Psoas muscle (tissue), 8 donors: ENCODE measurements at regions of chr10 and their contacts with region 1.

Region 1: DNA sequence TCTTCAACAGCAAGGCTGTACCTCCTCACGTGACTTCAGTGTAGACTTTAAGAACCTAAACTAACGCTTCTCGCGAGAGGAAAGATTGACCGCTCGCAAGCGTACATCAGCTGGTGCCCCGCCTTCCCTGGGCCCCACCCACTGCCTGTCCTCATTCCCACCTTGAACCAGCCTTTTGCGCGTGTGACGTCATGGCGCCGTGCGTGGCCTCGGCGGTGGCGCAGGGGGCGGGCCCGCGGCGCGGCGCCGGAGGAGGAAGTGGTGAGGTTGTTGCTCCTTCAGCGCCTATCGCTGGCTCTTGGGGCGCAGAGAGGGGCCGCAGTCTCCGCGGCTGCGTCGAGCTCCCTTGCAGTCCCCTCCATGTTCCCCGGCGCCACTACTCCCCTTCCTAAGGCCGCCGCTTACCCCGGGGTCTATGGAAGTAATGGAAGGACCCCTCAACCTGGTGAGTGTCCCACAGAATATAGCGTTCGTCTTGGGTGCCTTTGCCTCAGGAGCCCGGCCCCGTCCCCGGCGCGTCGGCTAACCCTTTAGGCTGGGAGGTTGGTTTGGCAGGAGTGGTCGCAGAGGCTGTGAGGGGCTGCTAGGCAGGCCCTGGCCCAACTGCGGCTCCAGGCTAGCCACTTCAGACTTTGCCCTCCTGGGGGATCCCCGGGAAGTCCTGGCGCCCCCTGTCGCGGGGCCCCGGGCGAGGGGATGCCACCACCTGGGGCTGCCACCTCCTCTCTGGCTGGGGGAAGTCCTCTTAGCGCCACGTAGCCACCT is at the start of gene NRBF2:
- DNase-seq: peak; percentile 98
- ATAC-seq: peak; percentile 98 to 99 (median 98)
- H3K4me3 ChIP-seq: peak within 1 kb of the TSS; percentile 97
- H3K27ac ChIP-seq: peak within 1 kb of the TSS; percentile 99
- H3K4me1 ChIP-seq: peaks cover 39% of the 10 kb centered on the region
- H3K27me3 ChIP-seq: no peaks in the 10 kb centered on the region
- CTCF ChIP-seq: peak; percentile 16
- total RNA-seq, gene NRBF2: 23.1 to 85.3 (median 31.7) TPM

Region 2: GRCh38 chr10:63003816-63004453 is 129.3 kb before region 1 on chr10:
- intact Hi-C with region 1: loop called in 1 of 2 experiments (anchors 10 kb)
- DNase-seq: no peak
- ATAC-seq: no peak
- H3K4me3 ChIP-seq: no peak overlapping the region
- H3K27ac ChIP-seq: no peak overlapping the region
- H3K4me1 ChIP-seq: no peaks in the 10 kb centered on the region
- H3K27me3 ChIP-seq: no peaks in the 10 kb centered on the region
- CTCF ChIP-seq: peak; percentile 24

Region 3: DNA sequence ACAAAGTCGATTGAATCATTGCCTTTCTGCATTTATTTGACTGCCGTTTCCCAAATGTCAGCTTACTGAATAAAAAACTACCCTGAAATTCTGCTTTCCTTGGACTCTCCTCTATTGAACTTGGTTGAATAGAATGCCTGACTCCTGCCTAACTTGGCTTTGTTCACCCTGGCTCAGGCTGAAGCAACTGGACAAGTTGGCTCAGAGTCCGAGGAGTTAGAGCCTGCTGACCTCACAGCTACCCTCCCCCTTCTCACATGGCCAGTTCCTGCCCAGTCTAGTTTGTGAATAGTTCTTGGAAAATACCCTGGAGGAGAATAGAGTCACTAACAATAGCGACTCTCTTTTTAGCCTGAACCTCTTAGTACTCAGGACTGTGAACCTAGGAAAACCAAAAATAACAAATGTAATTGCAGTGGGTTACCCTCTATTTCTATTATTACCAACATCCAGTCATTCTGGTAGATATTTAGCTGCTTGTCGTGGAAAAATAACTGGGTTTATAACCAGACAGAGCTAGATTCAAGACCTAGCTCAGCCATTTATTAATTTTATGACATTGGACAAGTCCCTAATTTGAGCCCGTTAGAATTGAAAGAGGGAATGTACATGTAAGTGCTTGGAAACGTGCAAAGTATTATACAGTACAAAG is 17.4 kb before region 1 on chr10:
- intact Hi-C with region 1: loop called in 1 of 2 experiments (anchors 1 kb)
- DNase-seq: peak; percentile 82 to 89
- ATAC-seq: peak; percentile 94 to 95 (median 94)
- H3K4me3 ChIP-seq: peak overlapping the region; percentile 23
- H3K27ac ChIP-seq: peak overlapping the region; percentile 93
- H3K4me1 ChIP-seq: peaks cover 24% of the 10 kb centered on the region
- H3K27me3 ChIP-seq: no peaks in the 10 kb centered on the region
- CTCF ChIP-seq: no peak